Activated CD8-positive, alpha-beta memory T cell treated with anti-CD3 and anti-CD28 coated beads, Interleukin-2, amount 10 ng/mL, durations not matched to agents 7 days and 5 days (primary cell): ENCODE measurements at regions of chr1 and their contacts with region 1.

Region 1: GRCh38 chr1:10494754-10495474 is 20.2 kb downstream of the PEX14 start:
- DNase-seq: peak; percentile 89
- ATAC-seq: peak; percentile 81
- H3K4me3 Mint-ChIP-seq: peak overlapping the region; percentile 77
- H3K27ac Mint-ChIP-seq: peak overlapping the region; percentile 97
- H3K4me1 Mint-ChIP-seq: peaks cover 54% of the 10 kb centered on the region
- H3K27me3 Mint-ChIP-seq: no peaks in the 10 kb centered on the region

Region 2: GRCh38 chr1:10209905-10210810 is 284.8 kb before region 1 on chr1 and contains the start of gene KIF1B:
- CTCF ChIA-PET with region 1: interaction called, 12 read pairs
- DNase-seq: peak; percentile 97
- ATAC-seq: peak; percentile 99
- H3K4me3 Mint-ChIP-seq: peak within 1 kb of the TSS; percentile 81
- H3K27ac Mint-ChIP-seq: peak within 1 kb of the TSS; percentile 70
- H3K4me1 Mint-ChIP-seq: peaks cover 32% of the 10 kb centered on the region
- H3K27me3 Mint-ChIP-seq: peaks cover 8% of the 10 kb centered on the region
- total RNA-seq, gene KIF1B: 14.2 to 21.3 TPM

Region 3: DNA sequence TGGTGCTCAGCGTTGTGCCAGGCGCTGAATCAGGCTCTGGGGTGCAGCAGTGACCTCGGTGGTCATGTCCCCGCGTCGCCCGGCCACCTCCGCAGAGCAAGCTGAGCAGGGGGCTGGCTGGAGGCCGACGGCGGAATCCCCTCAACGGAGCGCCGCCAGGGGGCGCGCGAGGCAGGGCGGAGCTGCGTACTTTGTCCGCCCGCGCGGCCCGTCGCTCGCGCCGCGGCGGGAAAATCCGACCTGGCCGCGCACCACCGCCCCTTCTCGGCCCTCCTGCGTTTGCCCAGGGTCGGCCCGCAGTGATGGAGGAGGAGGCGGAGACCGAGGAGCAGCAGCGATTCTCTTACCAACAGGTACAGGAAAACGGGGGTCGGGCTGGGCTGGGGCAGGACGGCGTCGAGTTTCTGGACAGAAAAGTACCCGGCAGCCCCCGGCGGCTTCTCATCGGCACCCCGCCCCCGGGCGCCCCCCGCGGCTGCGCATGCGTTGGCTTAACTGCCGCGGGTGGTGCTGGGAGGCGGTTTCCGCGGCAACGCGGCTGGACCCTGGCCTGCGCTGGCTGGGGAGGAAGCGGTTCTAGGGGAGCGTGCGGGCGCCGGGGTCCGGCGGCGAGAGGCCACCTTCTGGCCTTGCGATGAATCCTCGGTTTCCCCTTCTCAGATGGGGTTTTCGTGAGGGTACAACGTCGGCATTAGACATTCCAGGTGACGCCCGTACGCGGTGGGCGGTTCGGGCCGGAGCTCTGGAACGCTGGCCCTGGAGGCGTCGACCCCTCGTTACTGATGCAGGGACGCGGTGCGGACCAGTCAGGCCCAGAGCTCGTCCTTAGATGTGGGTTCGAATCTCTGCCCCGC is 64.5 kb before region 1 on chr1 and contains the start of gene CENPS:
- CTCF ChIA-PET with region 1: interaction called, 219 read pairs
- DNase-seq: peak; percentile 94
- ATAC-seq: peak; percentile 89
- H3K4me3 Mint-ChIP-seq: peak within 1 kb of the TSS; percentile 87
- H3K27ac Mint-ChIP-seq: peak within 1 kb of the TSS; percentile 93
- H3K4me1 Mint-ChIP-seq: peaks cover 37% of the 10 kb centered on the region
- H3K27me3 Mint-ChIP-seq: no peaks in the 10 kb centered on the region
- total RNA-seq, gene CENPS: 14.8 to 18.6 TPM

Region 4: GRCh38 chr1:10484521-10484920 is 10.4 kb before region 1 on chr1:
- CTCF ChIA-PET with region 1: interaction called, 29 read pairs
- DNase-seq: no peak
- ATAC-seq: no peak
- H3K4me3 Mint-ChIP-seq: no peak overlapping the region
- H3K27ac Mint-ChIP-seq: no peak overlapping the region
- H3K4me1 Mint-ChIP-seq: peaks cover 6% of the 10 kb centered on the region
- H3K27me3 Mint-ChIP-seq: no peaks in the 10 kb centered on the region

Region 5: GRCh38 chr1:10522322-10522860 is 27.5 kb after region 1 on chr1:
- CTCF ChIA-PET with region 1: interaction called, 21 read pairs
- DNase-seq: no peak
- ATAC-seq: no peak
- H3K4me3 Mint-ChIP-seq: no peak overlapping the region
- H3K27ac Mint-ChIP-seq: no peak overlapping the region
- H3K4me1 Mint-ChIP-seq: peaks cover 32% of the 10 kb centered on the region
- H3K27me3 Mint-ChIP-seq: no peaks in the 10 kb centered on the region

Region 6: GRCh38 chr1:10909697-10910671 is 415.1 kb after region 1 on chr1:
- CTCF ChIA-PET with region 1: interaction called, 10 read pairs
- DNase-seq: peak; percentile 83
- ATAC-seq: peak; percentile 91
- H3K4me3 Mint-ChIP-seq: no peak overlapping the region
- H3K27ac Mint-ChIP-seq: no peak overlapping the region
- H3K4me1 Mint-ChIP-seq: peaks cover 1% of the 10 kb centered on the region
- H3K27me3 Mint-ChIP-seq: peaks cover 11% of the 10 kb centered on the region